Activated CD4-positive, alpha-beta T cell treated with anti-CD3 and anti-CD28 coated beads for 36 hours (primary cell): ENCODE measurements at regions of chr2 and their contacts with region 1.

Region 1: DNA sequence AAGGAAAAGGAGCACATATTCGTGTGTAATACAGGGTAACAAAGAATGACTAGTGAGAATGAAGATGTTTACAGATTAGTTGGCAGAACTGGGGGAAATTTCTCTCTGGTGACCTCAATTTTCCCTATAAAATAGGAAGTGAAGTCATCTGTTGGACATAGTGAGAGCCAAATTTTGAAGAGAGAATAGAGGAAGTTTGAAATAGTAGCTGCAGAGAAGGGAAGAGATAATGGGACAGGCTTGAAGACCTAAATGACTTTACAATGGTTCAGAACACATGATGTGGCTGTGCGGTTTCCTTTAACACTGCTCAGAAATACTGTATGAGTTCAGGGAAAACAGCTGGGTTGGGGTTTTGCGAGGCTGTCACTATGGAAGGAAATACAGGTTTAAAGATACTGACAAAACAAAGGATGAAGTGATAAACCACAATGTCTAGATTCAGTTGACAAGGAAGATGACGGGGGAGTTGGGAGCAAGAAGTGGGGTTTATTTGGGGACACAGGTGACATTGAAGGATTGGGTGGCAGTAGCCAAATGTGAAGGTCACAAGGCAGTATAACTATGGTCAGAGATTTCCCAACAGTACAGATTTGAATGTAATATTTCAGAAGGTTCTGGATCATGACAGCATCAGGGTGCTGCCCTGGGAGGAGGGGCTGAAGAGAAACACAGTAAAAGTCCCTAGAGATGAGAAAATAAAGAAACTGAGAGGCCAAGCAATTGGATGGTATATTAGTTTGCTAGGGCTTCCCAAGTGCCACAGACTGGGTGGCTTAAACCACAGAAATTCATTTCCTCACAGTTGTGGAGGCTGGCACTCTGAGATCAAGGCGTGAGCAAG is 82.6 kb upstream of the TANK start:
- DNase-seq: peak; percentile 85
- ATAC-seq: peak; percentile 84
- H3K4me3 Mint-ChIP-seq: peak overlapping the region; percentile 42
- H3K27ac Mint-ChIP-seq: peak overlapping the region; percentile 88
- H3K4me1 Mint-ChIP-seq: peaks cover 44% of the 10 kb centered on the region
- H3K27me3 Mint-ChIP-seq: no peaks in the 10 kb centered on the region

Region 2: DNA sequence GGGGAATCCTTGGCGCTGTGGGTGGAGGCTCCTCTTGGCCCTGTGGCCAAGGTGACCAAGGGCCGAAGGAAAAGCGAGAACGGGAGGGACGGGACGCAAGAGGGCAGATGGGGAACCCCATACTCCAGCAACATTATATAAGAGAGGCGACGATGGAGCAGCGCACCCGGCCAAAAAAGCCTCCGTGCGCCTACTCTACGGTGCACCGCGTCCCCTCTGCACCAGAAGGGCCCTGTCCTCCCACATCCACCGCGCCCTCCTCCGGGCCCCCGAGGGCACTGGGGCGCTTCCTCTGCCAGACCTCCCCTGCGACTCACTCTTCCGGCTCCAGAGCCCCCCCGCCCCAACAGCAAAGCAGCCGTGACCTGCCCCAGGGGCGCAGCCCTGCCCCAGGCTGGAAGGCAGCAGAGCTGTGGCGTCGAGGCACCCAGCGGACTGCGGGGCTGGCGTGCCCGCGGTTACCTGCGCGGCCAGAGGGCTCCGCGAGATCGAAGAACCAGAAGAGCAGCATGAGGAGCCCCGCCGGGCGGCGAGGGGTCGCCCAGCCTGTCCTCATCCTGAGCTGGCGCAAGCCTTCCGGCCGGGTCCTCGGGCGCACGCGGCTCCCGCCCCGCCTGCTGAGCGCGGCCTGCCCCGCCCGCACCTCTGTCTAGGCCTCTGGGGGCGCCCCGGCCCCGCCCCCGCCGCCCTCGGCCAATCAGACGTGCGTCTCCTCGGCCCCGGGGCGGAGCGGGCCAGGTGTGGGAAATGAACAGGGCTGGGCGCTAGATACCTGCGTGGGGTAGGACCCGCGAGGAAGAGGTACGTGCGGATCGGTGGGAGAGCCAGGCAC is 1173.2 kb before region 1 on chr2:
- CTCF ChIA-PET with region 1: no interaction called
- POLR2A ChIA-PET with region 1: no interaction called
- intact Hi-C with region 1: loop called in 1 of 2 experiments (anchors 10 kb)
- DNase-seq: peak; percentile 91
- ATAC-seq: peak; percentile 76
- H3K4me3 Mint-ChIP-seq: peak within 1 kb of the TSS; percentile 93
- H3K27ac Mint-ChIP-seq: peak within 1 kb of the TSS; percentile 97
- H3K4me1 Mint-ChIP-seq: peaks cover 73% of the 10 kb centered on the region
- H3K27me3 Mint-ChIP-seq: no peaks in the 10 kb centered on the region

Region 3: DNA sequence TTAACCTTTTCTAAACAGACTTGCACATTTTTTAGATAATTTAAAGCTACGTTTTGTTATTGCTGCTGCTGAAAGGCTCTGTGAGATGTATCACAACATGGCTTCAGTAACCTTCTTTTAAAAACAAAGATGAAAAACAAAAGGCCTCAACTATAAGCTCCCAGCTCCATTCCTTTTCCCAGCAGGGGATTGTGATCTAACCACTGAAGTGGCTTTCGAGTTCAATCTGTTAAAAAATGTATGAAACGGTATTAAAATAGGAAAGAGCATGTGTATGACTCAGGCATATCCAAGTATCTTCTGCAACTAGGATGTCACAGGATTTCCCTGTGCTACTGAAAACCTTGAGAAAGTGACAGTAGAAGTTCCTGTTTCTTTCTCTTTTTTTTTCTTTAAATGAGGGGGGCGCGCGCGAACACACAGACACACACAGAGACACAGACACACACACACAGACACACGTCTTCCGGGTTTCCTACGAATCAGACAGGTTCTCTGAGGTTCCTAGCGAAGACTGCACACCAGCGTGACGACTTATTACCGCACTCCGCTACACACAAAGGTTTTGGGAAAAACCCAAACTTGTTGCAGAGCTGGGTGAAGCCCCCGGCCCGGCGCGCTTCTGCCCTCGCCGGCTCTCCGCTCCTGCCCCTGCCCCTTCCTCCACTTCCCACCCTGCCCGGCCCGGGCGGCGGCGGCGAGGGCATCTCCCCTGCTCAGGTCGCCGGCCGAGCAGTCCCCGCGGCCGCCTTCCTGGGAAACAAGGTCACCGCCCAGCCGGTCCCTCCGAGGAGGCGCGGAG is 670.8 kb before region 1 on chr2:
- CTCF ChIA-PET with region 1: no interaction called
- POLR2A ChIA-PET with region 1: no interaction called
- intact Hi-C with region 1: loop called in 1 of 2 experiments (anchors 5 kb)
- DNase-seq: peak; percentile 82
- ATAC-seq: peak; percentile 75
- H3K4me3 Mint-ChIP-seq: peak overlapping the region; percentile 85
- H3K27ac Mint-ChIP-seq: peak overlapping the region; percentile 98
- H3K4me1 Mint-ChIP-seq: peaks cover 79% of the 10 kb centered on the region
- H3K27me3 Mint-ChIP-seq: no peaks in the 10 kb centered on the region

Region 4: GRCh38 chr2:160869411-160869810 is 208.2 kb before region 1 on chr2:
- CTCF ChIA-PET with region 1: no interaction called
- POLR2A ChIA-PET with region 1: no interaction called
- intact Hi-C with region 1: no loop called
- DNase-seq: no peak
- ATAC-seq: no peak
- H3K4me3 Mint-ChIP-seq: no peak overlapping the region
- H3K27ac Mint-ChIP-seq: no peak overlapping the region
- H3K4me1 Mint-ChIP-seq: no peaks in the 10 kb centered on the region
- H3K27me3 Mint-ChIP-seq: no peaks in the 10 kb centered on the region

Region 5: GRCh38 chr2:161030260-161031063 is 47.1 kb before region 1 on chr2:
- CTCF ChIA-PET with region 1: no interaction called
- POLR2A ChIA-PET with region 1: no interaction called
- intact Hi-C with region 1: no loop called
- DNase-seq: no peak
- ATAC-seq: no peak
- H3K4me3 Mint-ChIP-seq: no peak overlapping the region
- H3K27ac Mint-ChIP-seq: no peak overlapping the region
- H3K4me1 Mint-ChIP-seq: peaks cover 4% of the 10 kb centered on the region
- H3K27me3 Mint-ChIP-seq: peaks cover 1% of the 10 kb centered on the region

Region 6: GRCh38 chr2:161104054-161104553 is 26.5 kb after region 1 on chr2:
- CTCF ChIA-PET with region 1: interaction called, 3 read pairs
- POLR2A ChIA-PET with region 1: interaction called, 3 read pairs
- intact Hi-C with region 1: loop called (anchors 1 to 2 kb)
- DNase-seq: peak; percentile 10
- ATAC-seq: peak; percentile 84
- H3K4me3 Mint-ChIP-seq: no peak overlapping the region
- H3K27ac Mint-ChIP-seq: no peak overlapping the region
- H3K4me1 Mint-ChIP-seq: peaks cover 32% of the 10 kb centered on the region
- H3K27me3 Mint-ChIP-seq: no peaks in the 10 kb centered on the region

Region 7: DNA sequence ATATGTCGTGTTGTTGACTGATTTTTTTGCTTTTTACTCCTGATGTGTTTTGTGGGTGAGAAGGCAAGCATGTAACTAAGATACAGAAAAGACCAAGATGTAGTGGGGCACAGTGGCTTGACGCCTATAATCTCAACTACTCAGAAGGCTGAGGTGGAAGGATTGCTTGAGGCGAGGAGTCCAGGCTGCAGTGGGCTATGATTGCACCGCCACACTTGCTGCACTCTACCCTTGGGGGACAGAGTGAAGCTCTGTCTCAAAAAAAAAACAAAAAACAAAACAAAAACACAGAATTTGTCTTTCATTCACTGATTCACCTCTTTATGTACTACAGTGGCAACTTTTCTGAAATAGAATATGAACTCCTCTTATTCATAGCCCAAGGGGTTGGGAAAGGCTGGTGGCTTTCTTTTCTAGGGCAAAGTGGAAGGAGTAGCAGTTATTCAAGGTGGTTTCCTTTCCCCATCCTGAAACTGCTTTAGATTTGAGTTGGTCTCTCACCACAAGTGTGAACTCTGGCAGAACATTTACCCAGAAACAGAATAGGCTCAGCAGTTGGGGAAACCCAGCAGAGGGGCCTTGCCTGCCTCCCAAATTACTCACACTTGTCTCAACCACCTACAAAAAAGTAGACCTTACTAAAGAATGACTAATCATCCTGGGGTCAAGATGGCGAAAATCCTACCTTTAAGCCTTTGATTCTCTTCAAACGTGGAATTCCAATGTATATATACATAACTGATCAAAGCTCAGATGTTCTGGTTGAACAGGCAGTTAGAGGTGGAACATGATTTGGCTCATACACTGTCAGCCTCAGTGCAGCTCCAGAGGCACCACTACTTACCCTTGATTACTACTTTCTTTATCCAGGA is 89.2 kb after region 1 on chr2:
- CTCF ChIA-PET with region 1: no interaction called
- POLR2A ChIA-PET with region 1: no interaction called
- intact Hi-C with region 1: loop called (anchors 1 kb)
- DNase-seq: peak; percentile 83
- ATAC-seq: peak; percentile 89
- H3K4me3 Mint-ChIP-seq: peak overlapping the region; percentile 54
- H3K27ac Mint-ChIP-seq: peak overlapping the region; percentile 85
- H3K4me1 Mint-ChIP-seq: peaks cover 91% of the 10 kb centered on the region
- H3K27me3 Mint-ChIP-seq: no peaks in the 10 kb centered on the region

Region 8: DNA sequence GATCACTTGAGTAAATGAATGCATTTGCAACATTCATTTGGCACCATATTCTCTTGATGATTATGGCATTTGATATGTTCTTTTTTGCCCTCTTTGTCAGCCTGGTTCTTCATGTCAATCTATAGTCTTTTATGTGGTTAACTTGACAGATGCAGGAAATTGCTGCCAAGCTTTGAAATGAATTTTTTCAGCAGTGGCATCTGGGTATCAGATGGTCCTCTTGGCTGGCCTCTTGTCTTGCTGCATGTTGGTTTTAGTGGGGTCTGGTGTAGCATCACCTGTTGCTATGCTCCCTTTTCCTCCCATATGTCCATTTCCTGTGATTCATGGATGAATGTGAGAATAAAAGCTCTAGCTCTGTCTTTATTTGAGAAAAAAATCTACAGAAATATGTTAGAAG is 876.5 kb after region 1 on chr2:
- CTCF ChIA-PET with region 1: no interaction called
- POLR2A ChIA-PET with region 1: no interaction called
- intact Hi-C with region 1: loop called in 1 of 2 experiments (anchors 2 kb)
- DNase-seq: no peak
- ATAC-seq: peak; percentile 15
- H3K4me3 Mint-ChIP-seq: no peak overlapping the region
- H3K27ac Mint-ChIP-seq: peak overlapping the region; percentile 89
- H3K4me1 Mint-ChIP-seq: peaks cover 54% of the 10 kb centered on the region
- H3K27me3 Mint-ChIP-seq: no peaks in the 10 kb centered on the region